Activated CD8-positive, alpha-beta T cell treated with anti-CD3 and anti-CD28 coated beads for 36 hours (primary cell): ENCODE measurements at regions of chr22 and their contacts with region 1.

Region 1: DNA sequence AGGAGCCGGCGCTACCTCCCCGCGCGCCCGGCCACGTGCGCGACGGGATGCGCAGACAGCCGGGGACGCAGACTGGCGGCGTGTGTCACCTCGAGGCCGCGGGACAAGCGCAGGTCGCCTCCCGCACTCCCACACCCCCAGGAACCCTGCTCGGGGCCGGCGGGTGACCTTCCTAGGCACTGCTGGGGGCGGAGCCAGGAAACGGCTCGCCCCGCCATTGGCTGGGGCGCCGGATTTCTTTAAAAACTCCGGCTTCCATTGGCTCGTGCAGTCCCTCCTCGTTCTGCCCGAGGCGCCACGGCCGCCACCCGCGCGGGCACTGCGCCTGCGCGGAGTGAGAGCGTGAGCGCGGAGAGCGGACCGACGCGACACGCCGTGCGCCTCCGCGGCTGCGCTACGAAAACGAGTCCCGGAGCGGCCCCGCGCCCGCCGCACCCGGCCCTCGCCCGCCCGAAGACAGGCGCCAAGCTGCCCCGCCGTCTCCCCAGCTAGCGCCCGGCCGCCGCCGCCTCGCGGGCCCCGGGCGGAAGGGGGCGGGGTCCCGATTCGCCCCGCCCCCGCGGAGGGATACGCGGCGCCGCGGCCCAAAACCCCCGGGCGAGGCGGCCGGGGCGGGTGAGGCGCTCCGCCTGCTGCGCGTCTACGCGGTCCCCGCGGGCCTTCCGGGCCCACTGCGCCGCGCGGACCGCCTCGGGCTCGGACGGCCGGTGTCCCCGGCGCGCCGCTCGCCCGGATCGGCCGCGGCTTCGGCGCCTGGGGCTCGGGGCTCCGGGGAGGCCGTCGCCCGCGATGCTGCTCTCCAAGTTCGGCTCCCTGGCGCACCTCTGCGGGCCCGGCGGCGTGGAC is at the start of gene PIM3:
- DNase-seq: peak; percentile 96
- ATAC-seq: peak; percentile 79
- H3K4me3 Mint-ChIP-seq: peak within 1 kb of the TSS; percentile 95
- H3K27ac Mint-ChIP-seq: peak within 1 kb of the TSS; percentile 95
- H3K4me1 Mint-ChIP-seq: peaks cover 25% of the 10 kb centered on the region
- H3K27me3 Mint-ChIP-seq: no peaks in the 10 kb centered on the region
- CTCF ChIP-seq: no peak
- total RNA-seq, gene PIM3: 146 to 158 TPM

Region 2: DNA sequence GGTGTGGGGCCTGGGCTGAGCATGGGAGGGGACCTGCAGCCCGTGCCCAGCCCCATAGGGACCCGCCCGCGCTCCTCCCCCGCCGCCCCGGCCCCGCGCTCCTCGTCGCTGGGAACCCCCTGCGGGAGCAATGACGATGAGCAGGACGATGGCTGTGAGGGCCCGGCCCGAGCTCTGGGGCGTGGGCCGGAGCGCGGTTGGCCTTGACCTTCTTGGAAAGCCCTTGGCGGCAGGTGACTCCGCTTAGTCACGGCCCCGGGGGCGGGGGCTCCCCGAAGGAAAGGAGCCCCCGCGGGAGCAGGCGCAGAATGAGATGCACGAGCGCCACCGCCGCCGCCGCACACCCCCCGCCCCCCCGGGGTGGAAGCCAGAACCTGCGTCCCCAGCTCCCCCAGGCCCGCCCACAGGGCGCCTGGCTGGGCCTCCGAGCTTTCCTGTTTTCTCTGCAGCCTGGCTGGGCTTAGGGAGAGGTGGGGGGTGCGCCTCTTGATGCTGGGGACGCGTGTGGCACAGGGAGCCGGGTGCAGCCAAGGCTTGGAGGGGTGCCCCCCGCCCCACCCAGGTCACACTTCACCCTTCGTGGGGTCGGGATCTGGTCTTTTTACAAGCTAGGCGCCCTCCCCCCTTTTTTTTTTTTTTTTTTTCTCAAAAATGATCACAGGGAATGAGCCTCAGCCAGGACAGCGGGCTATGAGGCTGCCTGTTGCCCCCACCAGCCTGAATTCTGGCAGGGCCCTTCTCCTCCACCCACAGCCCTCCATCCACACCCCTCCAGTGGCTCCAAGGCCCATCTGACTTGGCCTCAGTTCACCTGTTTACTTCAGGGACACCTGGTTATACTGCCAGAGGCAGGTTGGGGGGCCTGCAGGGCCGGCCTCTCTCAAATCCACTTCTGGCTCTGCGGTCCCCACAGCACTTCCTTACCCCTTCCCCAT is 24.1 kb before region 1 on chr22:
- CTCF ChIA-PET with region 1: interaction called, 9 read pairs
- POLR2A ChIA-PET with region 1: interaction called, 13 read pairs
- intact Hi-C with region 1: loop called (anchors 5 kb)
- DNase-seq: peak; percentile 100
- ATAC-seq: peak; percentile 87
- H3K4me3 Mint-ChIP-seq: peak overlapping the region; percentile 63
- H3K27ac Mint-ChIP-seq: peak overlapping the region; percentile 90
- H3K4me1 Mint-ChIP-seq: peaks cover 24% of the 10 kb centered on the region
- H3K27me3 Mint-ChIP-seq: no peaks in the 10 kb centered on the region
- CTCF ChIP-seq: no peak